ENCODE measurements at regions of chr2 and their contacts with region 1.

Region 1: GRCh38 chr2:85723707-85724360 is 29.7 kb downstream of the GNLY start:
- DNase-seq: no peak
- H3K4me3 ChIP-seq: no peak overlapping the region
- H3K27ac ChIP-seq: no peak overlapping the region
- H3K4me1 ChIP-seq: peaks cover 0 to 6% (median under 1%) of the 10 kb centered on the region in 4 experiments
- H3K27me3 ChIP-seq: peaks cover 0 to 5% (median 2%) of the 10 kb centered on the region in 5 experiments

Region 2: GRCh38 chr2:85707304-85707703 is 16.5 kb before region 1 on chr2:
- CTCF ChIA-PET with region 1: interaction called, 15 read pairs
- POLR2A ChIA-PET with region 1: no interaction called
- DNase-seq: peak; percentile 91 to 95 (median 93)
- H3K4me3 ChIP-seq: no peak overlapping the region
- H3K27ac ChIP-seq: no peak overlapping the region
- H3K4me1 ChIP-seq: peaks cover 19 to 72% (median 55%) of the 10 kb centered on the region in 4 experiments
- H3K27me3 ChIP-seq: no peaks in the 10 kb centered on the region

Region 3: GRCh38 chr2:85712849-85713602 is 10.8 kb before region 1 on chr2:
- CTCF ChIA-PET with region 1: interaction called, 15 read pairs
- POLR2A ChIA-PET with region 1: no interaction called
- DNase-seq: no peak
- H3K4me3 ChIP-seq: peak overlapping the region in 3 of 7 experiments; percentile 26 to 44 (median 43)
- H3K27ac ChIP-seq: no peak overlapping the region
- H3K4me1 ChIP-seq: peaks cover 20 to 75% (median 52%) of the 10 kb centered on the region in 4 experiments
- H3K27me3 ChIP-seq: no peaks in the 10 kb centered on the region

Region 4: DNA sequence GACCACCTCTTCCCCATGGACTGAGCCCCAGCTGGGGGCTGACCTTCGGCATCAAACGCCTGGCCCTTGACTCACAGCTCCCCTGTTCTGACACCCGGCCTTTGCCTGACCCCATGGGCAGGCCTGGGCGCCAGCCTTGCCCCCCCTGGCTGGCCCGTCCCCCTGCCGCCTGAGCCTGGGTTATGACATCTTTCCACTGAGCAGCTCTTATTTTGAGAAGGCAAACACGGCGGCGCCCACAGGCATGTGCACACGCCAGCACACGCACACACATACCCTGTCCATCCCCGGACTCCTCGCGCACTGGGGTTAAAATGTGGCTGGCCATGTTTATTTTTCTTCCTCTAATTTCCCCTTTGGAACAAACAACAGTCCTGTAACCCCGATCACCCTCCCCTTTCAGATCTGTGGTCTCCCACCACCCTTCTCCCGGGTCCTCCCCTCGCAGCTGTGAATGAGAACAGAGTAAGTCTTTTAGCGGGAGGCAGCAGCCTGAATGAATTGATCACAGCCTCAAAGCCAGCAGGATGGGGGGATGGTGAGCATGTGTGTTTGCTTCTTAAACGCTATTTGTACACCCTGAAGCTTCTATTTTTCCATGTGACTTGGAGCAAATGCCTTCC is 18.1 kb after region 1 on chr2:
- CTCF ChIA-PET with region 1: interaction called, 29 read pairs
- POLR2A ChIA-PET with region 1: no interaction called
- DNase-seq: peak in 2 of 3 donors; percentile 44 to 70
- H3K4me3 ChIP-seq: no peak overlapping the region
- H3K27ac ChIP-seq: no peak overlapping the region
- H3K4me1 ChIP-seq: peaks cover 0 to 11% (median 4%) of the 10 kb centered on the region in 4 experiments
- H3K27me3 ChIP-seq: peaks cover 0 to 20% (median 16%) of the 10 kb centered on the region in 5 experiments